ENCODE measurements at regions of chr5 and their contacts with region 1.

Region 1: DNA sequence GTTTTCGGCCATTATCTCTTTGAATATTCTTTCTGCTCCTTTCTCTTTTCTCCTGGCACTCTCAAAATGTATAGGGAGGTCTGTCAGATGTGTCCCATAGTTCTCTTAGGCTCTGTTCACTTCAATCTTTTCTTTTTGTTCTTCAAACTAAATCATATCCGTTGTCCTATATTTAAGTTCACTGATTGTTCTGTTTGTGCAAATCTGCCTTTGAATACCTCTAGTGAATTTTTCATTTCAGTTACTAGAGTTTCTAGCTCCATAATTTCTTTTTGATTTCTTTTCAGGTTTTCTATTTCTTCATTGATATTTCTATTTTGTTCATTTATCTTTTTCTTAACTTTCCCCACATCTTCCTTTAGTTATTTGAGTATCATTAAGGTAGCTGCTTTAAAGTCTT is 65.4 kb downstream of the CERT1 start:
- DNase-seq: no peak
- ATAC-seq: no peak

Region 2: GRCh38 chr5:75496026-75496425 is 50.0 kb after region 1 on chr5:
- intact Hi-C with region 1: loop called in 1 of 2 experiments (anchors 10 kb)
- DNase-seq: no peak
- ATAC-seq: no peak

Region 3: GRCh38 chr5:75632321-75632720 is 186.3 kb after region 1 on chr5:
- intact Hi-C with region 1: no loop called
- DNase-seq: no peak
- ATAC-seq: peak; percentile 47 to 91

Measured in left cardiac atrium (tissue), 4 donors.